RWPE1 (cell line): ENCODE measurements at regions of chr3 and their contacts with region 1.

Region 1: DNA sequence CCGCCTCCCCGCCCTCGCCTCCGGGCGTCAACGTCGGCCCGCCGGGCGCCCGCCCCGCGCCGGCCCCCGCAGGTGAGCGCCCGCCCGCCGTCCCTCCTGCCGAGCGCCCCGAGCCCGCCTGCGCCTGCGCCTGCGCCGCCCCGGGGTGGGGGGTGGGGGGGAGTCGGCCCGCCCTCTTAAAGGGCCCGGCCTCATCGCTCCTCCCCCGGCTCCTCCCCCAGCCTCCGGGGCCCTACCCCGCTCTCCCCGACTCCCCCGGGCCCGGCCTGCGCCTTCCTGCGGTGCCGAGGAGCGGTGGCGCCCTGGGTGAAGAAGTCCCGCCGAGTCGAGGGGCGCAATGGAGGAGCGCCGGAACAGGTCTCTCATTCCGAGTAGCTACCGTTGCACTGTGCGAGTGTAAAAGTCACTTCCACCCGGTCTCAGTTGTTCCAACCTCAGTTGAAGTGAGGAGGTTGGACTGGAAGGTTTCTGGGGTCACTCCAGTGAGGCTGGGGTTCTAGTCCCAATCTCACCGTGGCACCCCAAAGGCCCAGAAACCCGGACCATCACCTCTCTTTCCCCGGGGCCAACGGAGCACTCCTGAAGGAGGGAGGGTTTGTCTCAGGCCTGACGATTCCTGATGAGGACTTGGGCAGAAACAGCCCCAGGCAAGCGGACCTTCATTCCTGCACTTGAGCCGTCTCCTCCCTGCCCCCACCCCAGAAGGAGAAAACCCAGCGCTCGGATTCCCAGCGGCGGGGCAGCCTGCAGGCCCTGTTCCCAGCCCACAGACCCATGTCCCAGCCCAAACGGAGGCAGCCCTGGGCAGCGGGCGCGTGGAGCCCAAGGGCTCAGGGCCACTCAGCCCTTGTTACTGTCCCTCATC is 1.5 kb upstream of the TNK2 start:
- DNase-seq: peak; percentile 96
- H3K27ac ChIP-seq: peak overlapping the region; percentile 99
- CTCF ChIP-seq: no peak

Region 2: DNA sequence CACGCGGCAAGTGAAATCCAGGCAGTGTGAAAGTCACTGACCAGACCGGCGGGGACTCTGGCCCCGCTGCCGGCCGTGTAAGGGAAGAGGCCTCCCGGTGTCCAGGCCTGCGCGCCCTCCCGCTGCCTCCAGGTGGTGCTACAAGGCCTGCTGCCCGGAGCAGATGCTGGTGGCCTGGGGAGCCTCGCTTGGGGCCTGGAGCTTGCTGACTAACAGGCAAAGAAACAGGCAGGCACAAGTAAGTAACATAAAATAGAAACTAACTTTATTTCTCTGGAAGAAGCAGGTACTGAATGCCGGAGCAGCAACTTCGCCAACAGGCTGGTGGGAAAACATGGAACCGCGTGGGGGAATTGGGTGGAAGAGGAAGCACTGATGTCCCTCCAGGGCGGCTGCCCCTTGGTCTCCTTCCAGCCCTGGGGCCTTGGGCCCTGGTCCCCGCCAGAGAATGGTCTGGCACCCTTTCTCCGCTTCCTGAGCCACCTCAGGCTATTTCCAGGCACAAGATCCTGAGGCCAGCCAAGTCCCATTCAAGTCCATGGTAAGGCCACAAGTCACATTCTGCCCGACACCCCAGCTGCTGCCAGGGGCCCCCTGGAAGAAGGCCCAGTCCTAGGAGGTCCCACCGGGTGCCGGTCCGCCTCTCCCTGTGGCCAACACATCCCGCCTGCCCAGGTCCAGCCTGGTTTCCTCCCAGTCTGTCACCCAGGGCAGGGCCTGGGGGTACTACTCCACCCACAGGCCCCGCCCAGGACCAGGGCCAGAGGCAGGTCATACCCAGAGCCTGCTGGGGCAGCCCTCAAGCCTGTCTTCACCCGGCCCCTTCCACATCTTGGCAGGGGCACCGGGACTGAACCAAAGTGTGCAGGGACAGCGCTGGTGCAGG is 46.5 kb before region 1 on chr3:
- CTCF ChIA-PET with region 1: interaction called, 38 read pairs
- POLR2A ChIA-PET with region 1: interaction called, 4 read pairs
- DNase-seq: peak; percentile 77
- H3K27ac ChIP-seq: peak overlapping the region; percentile 98
- CTCF ChIP-seq: peak; percentile 98

Region 3: GRCh38 chr3:195886181-195887141 is 23.4 kb before region 1 on chr3:
- CTCF ChIA-PET with region 1: interaction called, 12 read pairs
- POLR2A ChIA-PET with region 1: no interaction called
- DNase-seq: no peak
- H3K27ac ChIP-seq: peak overlapping the region; percentile 63
- CTCF ChIP-seq: no peak

Region 4: GRCh38 chr3:195894780-195895607 is 14.9 kb before region 1 on chr3:
- CTCF ChIA-PET with region 1: interaction called, 43 read pairs
- POLR2A ChIA-PET with region 1: interaction called, 3 read pairs
- DNase-seq: peak; percentile 75
- H3K27ac ChIP-seq: peak overlapping the region; percentile 100
- CTCF ChIP-seq: peak; percentile 94